ENCODE measurements at regions of chr12 and their contacts with region 1.

Region 1: GRCh38 chr12:92145731-92146496 is at the start of gene BTG1:
- DNase-seq: peak; percentile 99
- H3K4me3 ChIP-seq: peak within 1 kb of the TSS; percentile 95
- CTCF ChIP-seq: no peak

Region 2: GRCh38 chr12:91778938-91779400 is 366.9 kb before region 1 on chr12:
- CTCF ChIA-PET with region 1: interaction called, 4 read pairs
- POLR2A ChIA-PET with region 1: interaction called, 20 read pairs
- DNase-seq: peak; percentile 51
- H3K4me3 ChIP-seq: no peak overlapping the region
- CTCF ChIP-seq: no peak

Region 3: DNA sequence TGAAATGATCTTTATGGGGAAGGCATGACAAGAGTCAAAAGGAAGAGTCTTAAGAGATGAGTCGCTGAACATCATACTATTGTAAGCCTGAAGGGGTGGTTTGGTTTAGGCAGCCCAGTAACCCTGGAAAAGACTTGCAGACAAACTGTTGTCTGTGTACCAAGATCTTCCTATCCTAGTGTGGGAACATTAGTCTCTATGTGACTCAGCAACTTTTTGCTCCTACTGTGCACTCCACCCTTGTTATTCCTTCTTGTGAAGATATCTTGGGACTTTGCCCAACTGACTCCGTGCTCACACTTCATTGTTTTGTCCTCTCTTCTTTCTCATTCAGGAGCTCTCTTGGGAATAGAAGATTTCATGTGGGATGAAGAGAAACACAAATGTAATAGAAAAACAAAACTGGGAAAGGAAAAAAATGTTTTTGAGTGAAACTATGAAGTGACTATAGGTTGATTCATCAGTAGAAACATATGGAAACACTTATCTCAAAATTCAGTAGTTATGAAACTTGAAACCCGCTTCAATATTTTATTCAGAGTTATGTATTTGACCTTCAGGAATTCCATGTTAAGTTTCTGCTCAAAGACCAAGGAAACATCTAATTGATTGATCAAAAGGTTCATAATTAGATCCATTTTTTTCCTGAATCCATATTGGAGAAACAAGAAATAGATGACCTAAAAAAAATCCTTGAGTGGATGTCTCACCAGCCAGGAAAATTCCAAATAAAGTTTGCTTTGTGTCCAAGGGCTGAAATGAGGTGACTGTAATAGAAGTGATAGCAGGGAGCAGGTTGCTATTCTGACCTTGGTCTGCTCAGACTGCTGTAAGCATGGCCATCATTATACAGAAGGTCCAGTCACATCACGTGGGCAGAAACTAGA is 67.5 kb before region 1 on chr12:
- CTCF ChIA-PET with region 1: interaction called, 5 read pairs
- POLR2A ChIA-PET with region 1: interaction called, 33 read pairs
- DNase-seq: peak; percentile 99
- H3K4me3 ChIP-seq: no peak overlapping the region
- CTCF ChIP-seq: no peak

Region 4: GRCh38 chr12:92108651-92109050 is 37.3 kb before region 1 on chr12:
- CTCF ChIA-PET with region 1: no interaction called
- POLR2A ChIA-PET with region 1: no interaction called
- DNase-seq: peak; percentile 66
- H3K4me3 ChIP-seq: no peak overlapping the region
- CTCF ChIP-seq: no peak

Region 5: GRCh38 chr12:92289629-92290349 is 143.9 kb after region 1 on chr12:
- CTCF ChIA-PET with region 1: no interaction called
- POLR2A ChIA-PET with region 1: interaction called, 14 read pairs
- DNase-seq: no peak
- H3K4me3 ChIP-seq: no peak overlapping the region
- CTCF ChIP-seq: no peak

Region 6: GRCh38 chr12:92408072-92408900 is 262.4 kb after region 1 on chr12:
- CTCF ChIA-PET with region 1: interaction called, 11 read pairs
- POLR2A ChIA-PET with region 1: interaction called, 5 read pairs
- DNase-seq: no peak
- H3K4me3 ChIP-seq: no peak overlapping the region
- CTCF ChIP-seq: peak; percentile 71

Region 7: DNA sequence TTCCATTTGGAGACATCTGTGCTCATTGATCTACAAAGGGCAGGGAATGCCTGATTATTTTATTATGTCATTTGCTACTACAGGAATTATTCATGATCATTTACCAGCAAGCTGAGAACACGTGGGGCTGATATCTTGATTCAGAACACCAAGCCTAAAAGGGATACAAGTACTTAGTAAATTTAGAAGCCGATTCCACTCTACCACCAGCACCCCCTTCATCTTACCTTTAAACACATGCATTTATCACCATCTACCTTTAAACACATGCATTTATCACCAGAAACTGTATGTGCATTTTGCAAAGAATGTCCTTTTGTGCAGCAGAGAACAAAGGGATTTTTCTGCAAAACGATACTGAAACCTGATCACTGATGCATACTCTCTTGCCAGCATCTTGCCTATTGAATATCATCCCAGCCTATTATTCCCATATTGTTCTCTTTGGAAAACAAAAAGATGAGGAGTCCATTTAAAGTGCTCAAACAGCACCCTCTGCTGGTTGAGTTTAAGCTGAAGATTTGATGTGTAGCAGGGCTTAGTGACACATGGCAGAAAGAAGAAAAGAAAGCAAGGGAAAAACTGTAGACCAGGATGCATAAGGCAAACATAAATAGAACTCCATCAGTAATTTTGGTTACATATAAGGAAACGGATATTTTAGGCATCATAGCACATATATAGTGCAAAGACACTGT is 424.3 kb after region 1 on chr12:
- CTCF ChIA-PET with region 1: interaction called, 6 read pairs
- POLR2A ChIA-PET with region 1: interaction called, 18 read pairs
- DNase-seq: peak; percentile 38
- H3K4me3 ChIP-seq: no peak overlapping the region
- CTCF ChIP-seq: peak; percentile 48

Measured in AG04449 (cell line).